ENCODE measurements at regions of chr16 and their contacts with region 1.

Region 1: DNA sequence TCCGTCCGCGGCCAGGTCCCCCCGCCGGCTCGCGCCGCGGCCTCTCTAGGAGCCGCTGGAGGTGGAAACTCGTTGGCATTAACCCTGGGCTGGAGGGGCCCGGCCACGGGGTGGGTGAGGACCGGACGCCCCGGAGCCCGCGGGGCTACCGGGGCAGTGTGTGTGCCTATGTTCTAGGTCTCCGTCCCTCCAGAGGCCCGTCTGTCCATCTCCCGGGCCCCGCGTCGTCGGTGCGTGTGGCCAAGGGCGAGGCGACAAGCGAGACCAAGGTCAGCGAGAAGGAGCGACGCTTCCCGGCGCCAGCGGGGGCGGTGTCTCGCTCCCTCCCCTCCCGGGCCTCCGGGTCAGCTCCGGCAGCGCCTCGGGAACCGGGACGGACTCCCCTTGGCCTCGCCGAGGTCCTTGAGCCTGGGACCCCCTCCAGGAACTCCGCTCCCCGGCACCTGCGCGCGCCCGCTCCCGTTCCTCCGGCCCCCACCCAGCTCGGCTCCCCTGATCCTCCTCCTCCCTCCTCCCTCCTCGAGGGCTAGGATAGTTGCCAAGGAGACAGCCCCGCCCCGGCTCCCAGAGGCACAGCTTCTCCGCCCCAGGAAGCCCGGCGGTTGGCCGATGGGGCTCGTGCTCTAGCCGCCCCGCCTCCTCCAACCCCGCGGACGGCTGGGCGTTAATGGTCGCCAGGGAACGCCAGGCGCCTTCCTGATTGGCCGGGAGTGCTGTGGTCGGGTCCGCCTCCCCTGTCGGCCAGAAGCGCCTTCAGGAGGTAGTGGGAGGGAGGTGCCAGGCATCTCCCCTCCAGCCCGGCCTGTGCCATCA is 663 bp upstream of the ZNF768 start:
- DNase-seq: peak; percentile 99

Region 2: DNA sequence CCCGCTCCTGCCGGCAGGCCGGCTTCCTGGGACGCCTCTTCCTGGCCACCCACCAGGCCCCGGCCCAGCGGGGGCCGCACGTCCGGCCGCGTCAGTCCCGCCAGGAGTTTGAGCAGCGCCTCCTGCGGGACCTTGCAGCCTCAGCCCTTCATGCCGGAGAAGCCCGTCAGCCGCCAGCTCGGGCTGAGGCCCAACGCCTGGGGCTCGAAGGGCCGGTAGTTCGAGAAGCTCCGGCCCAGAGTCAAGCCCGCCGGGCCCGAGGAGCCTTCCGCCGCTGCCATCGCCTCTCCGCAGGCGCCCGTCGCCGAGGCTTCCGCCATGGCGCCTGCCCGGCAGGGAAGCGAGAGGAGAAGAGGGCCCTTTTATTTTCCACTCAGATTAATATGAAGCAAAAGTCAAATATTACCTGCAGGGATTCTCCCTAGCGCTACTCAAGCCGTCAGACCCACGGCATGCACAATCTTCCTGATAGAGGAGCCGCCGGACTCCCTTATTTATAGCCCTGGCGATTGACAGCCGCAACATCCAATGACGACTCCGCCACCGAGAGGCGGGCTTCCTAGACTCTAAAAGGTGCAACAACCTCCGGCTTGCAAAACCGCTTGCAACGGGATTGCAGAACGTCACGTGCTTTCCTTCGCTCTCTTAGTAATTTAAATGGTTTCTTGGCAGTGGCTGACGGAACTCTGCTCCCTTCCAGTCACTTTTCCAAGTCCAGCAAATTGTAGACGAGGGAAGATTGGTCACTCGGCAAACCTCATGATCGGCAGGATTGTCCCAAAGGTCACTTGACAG is 81.4 kb before region 1 on chr16 and contains the start of gene SEPHS2:
- CTCF ChIA-PET with region 1: interaction called, 3 read pairs
- POLR2A ChIA-PET with region 1: interaction called, 24 read pairs
- DNase-seq: peak; percentile 98

Region 3: GRCh38 chr16:30499284-30499683 is 27.7 kb before region 1 on chr16:
- CTCF ChIA-PET with region 1: interaction called, 3 read pairs
- POLR2A ChIA-PET with region 1: interaction called, 10 read pairs
- DNase-seq: no peak

Region 4: GRCh38 chr16:30509081-30509765 is 17.8 kb before region 1 on chr16:
- CTCF ChIA-PET with region 1: no interaction called
- POLR2A ChIA-PET with region 1: interaction called, 19 read pairs
- DNase-seq: no peak

Region 5: DNA sequence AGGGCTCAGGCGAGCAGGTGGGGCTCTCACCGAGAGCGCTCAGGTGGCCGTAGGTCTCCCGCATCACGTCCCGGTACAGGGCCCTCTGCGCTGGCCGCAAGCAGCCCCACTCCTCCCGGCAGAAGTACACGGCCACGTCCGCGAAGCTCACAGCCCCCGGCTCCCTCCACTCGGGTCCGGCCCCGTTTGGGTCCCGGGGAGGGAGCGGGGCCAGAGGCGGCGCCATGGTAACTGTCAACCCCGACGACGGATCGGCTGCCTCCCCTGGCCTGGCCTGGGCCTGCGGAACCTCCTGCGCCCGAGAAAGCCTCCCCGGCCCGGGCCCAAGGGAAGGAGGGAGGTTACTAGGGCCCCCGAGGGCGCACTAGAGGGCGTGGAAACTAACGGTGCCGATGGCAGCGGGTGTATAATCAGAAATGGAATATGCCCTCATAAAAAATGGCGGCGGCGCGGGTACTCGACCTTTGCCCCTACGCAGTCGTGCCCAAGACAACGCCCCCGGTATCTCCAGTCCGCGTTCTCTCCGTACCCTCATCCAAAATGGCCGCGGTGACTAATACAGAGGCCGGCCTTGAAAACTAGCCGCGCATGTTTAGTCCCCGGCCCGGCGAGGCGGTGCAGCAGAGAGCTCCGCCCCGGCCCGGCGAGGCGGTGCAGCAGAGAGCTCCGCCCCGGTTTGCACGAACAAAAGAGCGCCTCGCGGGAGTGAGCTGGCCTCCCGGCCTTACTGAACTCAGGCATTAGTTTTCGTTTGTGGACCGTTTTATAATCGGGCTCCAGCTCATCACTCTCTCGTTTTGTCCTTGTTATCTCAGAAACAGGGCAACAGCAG is 31.1 kb after region 1 on chr16 and contains the start of gene ZNF764:
- CTCF ChIA-PET with region 1: no interaction called
- POLR2A ChIA-PET with region 1: interaction called, 181 read pairs
- DNase-seq: peak; percentile 98

Region 6: DNA sequence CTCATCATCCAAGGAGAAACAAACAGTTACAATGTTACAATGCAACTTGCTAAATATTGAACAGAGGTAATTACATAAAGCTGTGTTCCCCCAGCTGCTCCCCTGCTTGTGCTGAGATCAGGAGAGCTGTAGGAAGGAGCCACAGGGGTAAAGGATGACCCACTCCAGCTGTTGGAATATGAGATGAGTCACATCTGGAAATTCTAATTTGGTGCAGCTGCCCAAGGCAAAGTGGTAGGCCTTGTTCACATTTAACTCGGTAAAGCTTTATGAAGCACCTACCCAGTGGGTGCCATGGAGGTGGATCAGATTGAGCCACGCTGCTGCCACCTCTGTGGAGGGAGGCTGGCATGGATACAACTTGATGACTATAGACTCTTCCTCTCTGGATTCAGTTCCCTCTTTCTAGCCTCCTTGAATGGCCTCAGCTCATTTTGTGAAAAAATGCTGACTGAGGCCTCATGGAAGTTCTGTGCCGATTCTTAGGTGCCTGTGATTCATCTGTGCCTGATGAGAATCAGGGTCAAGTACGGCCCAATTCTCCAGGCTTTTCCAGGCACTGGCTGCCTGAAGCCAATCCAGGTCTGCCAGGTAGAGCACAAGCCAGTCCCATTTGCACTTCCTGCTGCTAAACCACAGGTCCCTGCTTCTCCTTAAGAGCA is 75.7 kb after region 1 on chr16:
- CTCF ChIA-PET with region 1: interaction called, 5 read pairs
- POLR2A ChIA-PET with region 1: interaction called, 11 read pairs
- DNase-seq: no peak

Measured in HEK293T (cell line).